Naive thymus-derived CD8-positive, alpha-beta T cell (primary cell): ENCODE measurements at regions of chr10 and their contacts with region 1.

Region 1: GRCh38 chr10:74151056-74151878 is at the start of gene ADK:
- DNase-seq: peak in 9 of 10 donors; percentile 98 to 100 (median 100)
- ATAC-seq: peak; percentile 90 to 91
- H3K4me3 Mint-ChIP-seq: no peak within 1 kb of the TSS
- H3K27ac Mint-ChIP-seq: peak within 1 kb of the TSS in 7 of 10 donors; percentile 29 to 87 (median 78)
- H3K4me1 Mint-ChIP-seq: peaks cover 19 to 53% (median 47%) of the 10 kb centered on the region in 4 donors
- H3K27me3 Mint-ChIP-seq: no peaks in the 10 kb centered on the region
- polyA plus RNA-seq, gene ADK: 48.7 to 52.4 (median 49.0) TPM

Region 2: DNA sequence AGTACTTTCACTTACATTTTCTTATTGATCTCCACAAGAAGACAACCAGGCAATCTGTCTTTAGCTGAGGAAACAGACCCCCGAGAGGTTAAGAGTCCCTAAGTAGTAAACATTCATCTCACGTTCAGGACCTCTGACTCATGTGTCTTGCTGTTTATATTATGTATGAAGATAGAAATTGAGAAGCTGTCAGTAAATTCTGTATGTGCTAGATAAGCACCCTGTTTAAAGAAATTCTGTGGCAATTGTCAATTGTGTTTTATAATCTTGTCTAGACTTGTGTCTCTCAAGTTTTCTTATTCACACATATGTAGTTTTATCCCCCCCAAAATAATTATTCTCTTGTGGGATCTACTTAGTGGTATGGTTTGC is 14.2 kb after region 1 on chr10:
- POLR2A ChIA-PET with region 1: interaction called, 16 read pairs
- DNase-seq: no peak
- ATAC-seq: no peak
- H3K4me3 Mint-ChIP-seq: no peak overlapping the region
- H3K27ac Mint-ChIP-seq: peak overlapping the region in 3 of 10 donors; percentile 11 to 83 (median 24)
- H3K4me1 Mint-ChIP-seq: peaks cover 17 to 62% (median 21%) of the 10 kb centered on the region in 4 donors
- H3K27me3 Mint-ChIP-seq: no peaks in the 10 kb centered on the region

Region 3: GRCh38 chr10:74176380-74177139 is 25.3 kb after region 1 on chr10:
- POLR2A ChIA-PET with region 1: interaction called, 29 read pairs
- DNase-seq: peak; percentile 90 to 97 (median 95)
- ATAC-seq: peak; percentile 94 to 95
- H3K4me3 Mint-ChIP-seq: peak overlapping the region; percentile 88 to 96 (median 92)
- H3K27ac Mint-ChIP-seq: peak overlapping the region; percentile 97 to 99 (median 98)
- H3K4me1 Mint-ChIP-seq: peaks cover 12 to 48% (median 44%) of the 10 kb centered on the region in 4 donors
- H3K27me3 Mint-ChIP-seq: no peaks in the 10 kb centered on the region

Region 4: DNA sequence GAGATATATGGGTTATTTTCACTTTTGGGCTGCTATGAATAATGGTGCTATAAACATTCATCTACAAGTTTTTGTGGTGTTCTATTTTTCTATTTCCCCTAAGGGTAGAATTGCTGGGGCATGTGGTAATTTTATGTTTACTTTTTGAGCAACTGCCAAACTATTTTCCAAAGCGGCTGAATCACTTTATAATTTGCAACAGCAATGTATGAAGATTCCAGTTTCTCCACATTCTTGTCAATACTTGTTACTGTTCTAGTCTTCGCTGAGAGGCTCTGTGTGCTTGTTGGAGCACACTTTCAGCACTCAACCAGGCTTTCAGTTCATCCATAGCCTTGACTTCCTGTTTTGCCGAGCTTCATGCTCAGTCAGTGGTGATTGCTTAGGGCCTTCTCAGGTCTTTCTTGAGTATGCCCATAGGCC is 38.7 kb after region 1 on chr10:
- POLR2A ChIA-PET with region 1: interaction called, 18 read pairs
- DNase-seq: peak in 2 of 10 donors; percentile 38 to 51
- ATAC-seq: peak; percentile 55 to 86
- H3K4me3 Mint-ChIP-seq: peak overlapping the region; percentile 26 to 81 (median 72)
- H3K27ac Mint-ChIP-seq: peak overlapping the region; percentile 87 to 99 (median 92)
- H3K4me1 Mint-ChIP-seq: peaks cover 23 to 78% (median 63%) of the 10 kb centered on the region in 4 donors
- H3K27me3 Mint-ChIP-seq: no peaks in the 10 kb centered on the region

Region 5: DNA sequence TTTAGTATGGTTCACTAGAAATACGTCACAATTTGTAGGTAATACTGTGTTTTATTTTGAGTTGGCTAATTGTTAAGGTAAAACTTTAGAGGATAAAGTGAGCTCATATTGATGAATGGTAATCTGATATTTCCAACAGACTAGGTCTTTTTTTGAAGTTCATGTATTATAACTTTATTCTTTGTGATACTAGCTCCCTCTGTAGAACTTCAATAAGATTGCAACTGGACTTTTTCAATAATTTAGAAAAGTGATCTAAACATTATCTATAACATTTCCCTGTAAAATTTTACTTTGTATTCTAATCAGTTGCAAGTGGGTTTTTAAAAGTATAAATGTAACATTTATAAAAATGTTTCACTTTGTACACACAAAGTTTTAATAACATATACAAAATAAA is 83.3 kb after region 1 on chr10:
- POLR2A ChIA-PET with region 1: interaction called, 14 read pairs
- DNase-seq: peak in 2 of 10 donors; percentile 21 to 32
- ATAC-seq: peak in 1 of 2 donors; percentile 37
- H3K4me3 Mint-ChIP-seq: no peak overlapping the region
- H3K27ac Mint-ChIP-seq: peak overlapping the region in 1 of 10 donors; percentile 40
- H3K4me1 Mint-ChIP-seq: peaks cover 0 to 20% (median 3%) of the 10 kb centered on the region in 4 donors
- H3K27me3 Mint-ChIP-seq: no peaks in the 10 kb centered on the region